Right ventricle myocardium superior (tissue), 1 donor: ENCODE measurements at regions of chr5 and their contacts with region 1.

Region 1: DNA sequence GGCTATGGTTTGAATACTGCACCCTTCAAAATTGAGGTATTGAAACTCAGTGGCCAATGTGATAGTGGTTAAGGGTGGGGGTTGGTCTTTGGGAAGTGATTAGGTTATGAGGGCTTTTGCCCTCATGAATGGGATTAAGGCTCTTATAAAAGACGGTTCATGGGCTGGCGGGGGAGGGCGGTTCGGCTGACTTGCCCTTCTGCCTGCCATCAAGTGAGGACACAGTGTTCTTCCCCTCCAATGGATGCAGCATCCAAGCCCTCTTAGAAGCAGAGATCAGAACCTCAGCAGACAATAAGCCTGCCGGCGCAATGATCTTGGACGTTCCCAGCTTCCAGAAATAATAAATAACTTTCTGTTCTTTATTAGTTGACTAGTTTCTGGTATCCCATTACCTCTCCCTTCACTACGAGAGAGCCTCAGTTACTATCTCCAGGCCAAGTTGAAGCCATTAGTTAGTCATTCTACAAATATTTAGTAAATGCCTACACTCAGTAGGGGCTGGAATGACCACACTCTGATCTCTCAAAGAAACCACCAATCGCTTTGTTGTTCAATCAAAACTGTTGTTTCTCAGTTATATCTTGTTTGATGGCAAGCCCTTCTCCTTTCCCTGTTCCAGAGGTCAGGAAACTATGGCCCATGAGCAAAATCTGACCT is 219.3 kb downstream of the TSSK1B start:
- DNase-seq: no peak
- ATAC-seq: no peak

Region 2: GRCh38 chr5:113123618-113124017 is 91.9 kb before region 1 on chr5:
- intact Hi-C with region 1: no loop called
- DNase-seq: no peak
- ATAC-seq: no peak

Region 3: DNA sequence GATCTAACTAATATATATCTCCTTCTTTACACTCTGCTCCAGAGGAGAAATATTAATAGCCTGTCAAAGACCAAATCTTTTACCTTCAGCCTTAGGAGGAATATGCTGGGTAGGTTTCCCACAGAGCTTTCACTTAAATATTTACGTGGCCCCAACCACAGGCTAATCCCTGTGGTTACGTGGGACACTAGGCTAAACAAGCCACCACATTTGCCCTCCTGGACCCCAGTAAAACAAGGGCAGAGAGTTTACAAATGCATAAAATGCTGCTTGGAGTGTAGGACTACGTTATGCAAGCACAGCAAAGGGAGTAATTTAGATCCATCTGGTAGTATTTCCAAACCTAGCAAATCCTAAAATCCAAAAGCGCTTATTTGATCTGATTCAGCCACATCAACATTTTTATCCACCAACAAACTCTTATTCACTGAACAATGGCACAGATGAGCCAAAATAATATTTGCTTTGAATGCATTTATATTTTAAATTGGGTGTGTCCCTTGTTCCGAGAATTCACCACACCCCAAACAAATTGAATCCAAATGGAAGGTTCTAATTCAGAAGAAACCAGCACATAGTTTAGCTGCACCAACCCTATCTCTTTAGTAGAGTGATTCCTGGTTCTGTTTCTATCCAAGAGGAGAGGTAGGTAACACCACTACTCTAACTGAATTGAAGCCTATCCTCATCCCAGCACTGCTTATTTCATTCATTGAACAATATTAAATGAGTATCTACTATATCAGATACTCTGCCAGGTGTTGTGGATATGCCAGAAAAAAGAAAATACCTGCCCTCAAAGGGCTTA is 40.3 kb after region 1 on chr5:
- intact Hi-C with region 1: loop called (anchors 5 kb)
- DNase-seq: no peak
- ATAC-seq: no peak

Region 4: GRCh38 chr5:113294311-113295110 is 79.0 kb after region 1 on chr5:
- intact Hi-C with region 1: loop called (anchors 5 kb)
- DNase-seq: peak; percentile 94
- ATAC-seq: peak; percentile 96